Activated naive CD4-positive, alpha-beta T cell treated with anti-CD3 and anti-CD28 coated beads for 36 hours (primary cell): ENCODE measurements at regions of chr10 and their contacts with region 1.

Region 1: GRCh38 chr10:70363971-70364771 is 18.3 kb downstream of the LRRC20 start:
- DNase-seq: peak; percentile 92
- H3K4me3 Mint-ChIP-seq: no peak overlapping the region
- H3K27ac Mint-ChIP-seq: no peak overlapping the region
- H3K4me1 Mint-ChIP-seq: peaks cover 10% of the 10 kb centered on the region
- H3K27me3 Mint-ChIP-seq: no peaks in the 10 kb centered on the region

Region 2: GRCh38 chr10:70221030-70221429 is 143.1 kb before region 1 on chr10:
- CTCF ChIA-PET with region 1: interaction called, 100 read pairs
- intact Hi-C with region 1: loop called (anchors 1 kb)
- DNase-seq: no peak
- H3K4me3 Mint-ChIP-seq: no peak overlapping the region
- H3K27ac Mint-ChIP-seq: peak overlapping the region; percentile 82
- H3K4me1 Mint-ChIP-seq: peaks cover 34% of the 10 kb centered on the region
- H3K27me3 Mint-ChIP-seq: no peaks in the 10 kb centered on the region

Region 3: GRCh38 chr10:70233109-70233938 is 130.8 kb before region 1 on chr10 and contains the start of gene PPA1:
- CTCF ChIA-PET with region 1: interaction called, 25 read pairs
- intact Hi-C with region 1: no loop called
- DNase-seq: peak; percentile 99
- H3K4me3 Mint-ChIP-seq: peak within 1 kb of the TSS; percentile 87
- H3K27ac Mint-ChIP-seq: peak within 1 kb of the TSS; percentile 93
- H3K4me1 Mint-ChIP-seq: peaks cover 36% of the 10 kb centered on the region
- H3K27me3 Mint-ChIP-seq: no peaks in the 10 kb centered on the region
- total RNA-seq, gene PPA1: 392 to 408 TPM

Region 4: GRCh38 chr10:70272925-70273316 is 91.2 kb before region 1 on chr10:
- CTCF ChIA-PET with region 1: interaction called, 16 read pairs
- intact Hi-C with region 1: loop called (anchors 1 kb)
- DNase-seq: peak; percentile 35
- H3K4me3 Mint-ChIP-seq: no peak overlapping the region
- H3K27ac Mint-ChIP-seq: peak overlapping the region; percentile 56
- H3K4me1 Mint-ChIP-seq: peaks cover 22% of the 10 kb centered on the region
- H3K27me3 Mint-ChIP-seq: no peaks in the 10 kb centered on the region